Mammary epithelial cell (primary cell): ENCODE measurements at regions of chr7 and their contacts with region 1.

Region 1: DNA sequence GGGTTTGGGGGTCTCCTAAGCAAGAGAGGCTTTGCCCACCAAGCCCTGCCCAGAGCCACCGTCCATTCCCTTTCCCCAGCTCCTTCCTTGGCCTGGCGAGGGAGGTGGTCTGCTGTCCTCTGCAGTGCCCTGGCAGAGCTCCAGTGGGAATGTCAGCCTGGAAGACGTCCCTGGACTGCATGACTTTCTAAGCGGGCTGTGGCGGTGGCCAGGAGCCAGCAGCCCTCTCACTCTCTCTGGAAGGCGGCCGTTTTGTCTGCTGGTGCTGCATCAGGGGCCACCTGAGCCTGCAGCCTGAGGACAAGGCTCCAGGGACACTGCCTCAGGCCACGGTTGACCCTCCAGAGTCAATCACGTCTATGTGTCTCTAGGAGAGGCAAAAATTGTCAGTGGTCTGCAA is 271.0 kb downstream of the SKAP2 start:
- DNase-seq: no peak
- H3K4me3 ChIP-seq: no peak overlapping the region
- H3K27ac ChIP-seq: no peak overlapping the region
- H3K4me1 ChIP-seq: no peaks in the 10 kb centered on the region
- H3K27me3 ChIP-seq: no peaks in the 10 kb centered on the region
- CTCF ChIP-seq: no peak

Region 2: GRCh38 chr7:26534649-26535482 is 58.5 kb before region 1 on chr7:
- CTCF ChIA-PET with region 1: no interaction called
- dilution Hi-C with region 1: no loop called
- in situ Hi-C with region 1: no loop called
- intact Hi-C with region 1: no loop called
- DNase-seq: no peak
- H3K4me3 ChIP-seq: no peak overlapping the region
- H3K27ac ChIP-seq: no peak overlapping the region
- H3K4me1 ChIP-seq: no peaks in the 10 kb centered on the region
- H3K27me3 ChIP-seq: no peaks in the 10 kb centered on the region
- CTCF ChIP-seq: no peak

Region 3: DNA sequence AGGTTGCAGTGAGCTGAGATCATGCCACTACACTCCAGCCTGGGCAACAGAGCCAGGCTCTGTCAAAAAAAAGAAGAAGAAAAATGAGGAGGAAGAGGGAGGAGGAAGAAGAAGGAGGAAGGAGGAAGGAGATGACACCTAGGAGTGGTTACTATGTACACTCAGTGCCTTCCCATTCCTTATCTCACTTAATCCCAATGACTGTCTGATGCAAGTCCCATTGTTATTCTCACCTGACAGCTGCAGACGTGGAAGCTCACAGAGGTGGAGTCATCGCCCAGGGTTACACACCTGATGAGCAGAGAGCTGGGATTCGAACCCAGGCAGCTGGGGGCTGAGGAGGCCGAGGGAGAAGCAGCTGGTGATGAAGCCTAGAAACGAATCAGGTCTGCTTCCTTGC is 42.9 kb before region 1 on chr7:
- CTCF ChIA-PET with region 1: no interaction called
- dilution Hi-C with region 1: loop called (anchors 5 kb)
- in situ Hi-C with region 1: no loop called
- intact Hi-C with region 1: no loop called
- DNase-seq: peak; percentile 41
- H3K4me3 ChIP-seq: no peak overlapping the region
- H3K27ac ChIP-seq: peak overlapping the region; percentile 19
- H3K4me1 ChIP-seq: peaks cover 21% of the 10 kb centered on the region
- H3K27me3 ChIP-seq: no peaks in the 10 kb centered on the region
- CTCF ChIP-seq: no peak